ENCODE measurements at regions of chr1 and their contacts with region 1.

Region 1: DNA sequence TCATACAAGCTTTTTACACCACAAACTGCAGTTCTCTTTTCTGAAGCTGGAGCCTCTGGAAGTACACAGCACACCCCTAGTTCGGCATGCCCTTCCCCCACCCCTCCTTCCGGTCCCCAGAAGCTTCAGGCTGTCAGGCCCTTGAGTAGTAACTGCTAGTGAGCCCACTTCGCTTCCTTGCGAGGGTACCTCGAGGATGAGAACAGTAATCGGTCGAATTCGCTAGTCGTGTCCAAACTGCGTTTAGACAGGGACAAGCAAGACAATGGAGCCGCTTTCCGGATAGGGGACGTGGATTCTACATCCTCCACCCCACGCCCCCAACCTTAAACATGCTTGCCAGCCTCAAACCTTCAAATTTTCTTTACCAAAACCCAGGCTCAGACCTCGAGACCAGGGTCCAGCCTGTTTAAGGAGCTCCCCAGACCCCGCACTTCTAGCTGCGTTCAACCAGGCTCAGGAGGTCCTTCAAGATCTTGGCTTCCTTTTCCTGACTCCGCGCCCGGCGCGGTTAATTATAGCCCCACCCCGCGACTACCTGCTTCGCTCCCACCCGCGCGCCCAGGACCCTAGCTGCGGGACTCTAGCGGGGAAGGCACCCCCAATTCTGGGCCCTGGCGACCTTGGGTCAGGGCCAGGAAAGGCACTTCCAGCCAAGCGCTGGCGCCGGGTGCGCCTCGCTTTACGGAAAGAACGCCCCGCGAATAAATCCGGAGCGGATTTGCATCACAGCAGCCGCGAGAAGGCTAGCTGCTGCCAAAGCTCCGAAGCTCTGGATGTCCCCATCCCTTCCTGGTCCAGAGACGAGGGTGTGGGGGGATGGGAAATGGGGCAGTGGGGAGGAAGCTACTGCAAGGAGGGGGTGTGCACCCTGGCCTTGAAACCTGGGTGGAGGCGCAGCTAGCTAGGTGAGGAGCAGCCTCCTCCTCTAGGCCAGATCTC is 8.1 kb upstream of the TSPAN1 start:
- DNase-seq: peak; percentile 63
- H3K4me3 Mint-ChIP-seq: peak overlapping the region; percentile 76
- H3K27ac Mint-ChIP-seq: peak overlapping the region; percentile 72
- H3K4me1 Mint-ChIP-seq: peaks cover 16% of the 10 kb centered on the region
- H3K27me3 Mint-ChIP-seq: peaks cover 2% of the 10 kb centered on the region

Region 2: GRCh38 chr1:45930258-45931150 is 236.3 kb before region 1 on chr1:
- CTCF ChIA-PET with region 1: no interaction called
- POLR2A ChIA-PET with region 1: no interaction called
- intact Hi-C with region 1: no loop called
- DNase-seq: no peak
- H3K4me3 Mint-ChIP-seq: no peak overlapping the region
- H3K27ac Mint-ChIP-seq: no peak overlapping the region
- H3K4me1 Mint-ChIP-seq: peaks cover 9% of the 10 kb centered on the region
- H3K27me3 Mint-ChIP-seq: no peaks in the 10 kb centered on the region

Region 3: DNA sequence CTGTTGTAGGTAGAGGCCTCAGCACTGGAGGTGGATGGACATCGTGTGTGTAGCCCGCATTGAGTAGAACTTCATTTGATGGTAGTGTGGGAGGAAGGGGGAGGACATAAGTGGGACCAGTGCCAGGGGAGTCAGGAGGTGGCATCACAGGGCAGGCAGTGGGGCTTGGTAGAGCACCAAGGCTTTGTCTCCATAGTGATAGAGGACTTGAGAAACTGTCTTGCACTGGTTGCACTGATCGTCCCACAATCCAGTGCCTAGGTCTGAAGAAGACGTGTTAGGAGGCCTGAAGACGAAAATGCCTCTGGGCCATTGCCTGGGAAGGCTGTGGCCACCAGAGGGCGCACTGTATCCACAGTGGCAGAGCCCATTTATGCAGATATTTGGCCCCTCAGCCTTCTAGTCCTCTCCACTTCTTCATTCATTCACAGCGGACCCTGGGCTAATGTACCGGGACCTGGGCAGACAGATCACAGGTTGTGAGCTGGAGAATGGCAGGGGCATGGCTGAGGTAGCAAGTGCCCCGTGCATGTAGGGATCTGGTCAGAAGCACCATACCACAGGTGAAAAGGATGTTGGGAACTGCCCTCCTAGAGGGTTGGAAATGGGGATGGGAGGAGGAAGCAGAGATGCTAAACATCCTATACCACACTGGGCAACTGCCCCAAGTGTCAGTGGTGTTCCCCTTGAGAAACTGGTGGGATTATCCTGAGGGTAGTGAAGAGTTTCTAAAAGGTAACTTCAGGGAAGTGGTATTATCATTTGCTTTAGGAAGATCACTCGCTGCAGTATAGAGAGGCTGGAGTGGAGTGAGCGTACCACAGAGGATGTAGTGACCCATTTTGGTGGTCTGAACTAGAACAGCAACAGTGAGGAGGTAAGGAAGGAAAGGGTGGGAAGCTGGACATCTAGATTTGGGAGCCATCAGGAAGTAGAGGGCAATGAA is 129.6 kb before region 1 on chr1:
- CTCF ChIA-PET with region 1: interaction called, 15 read pairs
- POLR2A ChIA-PET with region 1: no interaction called
- intact Hi-C with region 1: no loop called
- DNase-seq: peak; percentile 88
- H3K4me3 Mint-ChIP-seq: no peak overlapping the region
- H3K27ac Mint-ChIP-seq: no peak overlapping the region
- H3K4me1 Mint-ChIP-seq: no peaks in the 10 kb centered on the region
- H3K27me3 Mint-ChIP-seq: no peaks in the 10 kb centered on the region

Region 4: GRCh38 chr1:46132529-46133180 is 34.1 kb before region 1 on chr1 and contains the start of gene PIK3R3:
- CTCF ChIA-PET with region 1: interaction called, 4 read pairs
- POLR2A ChIA-PET with region 1: no interaction called
- intact Hi-C with region 1: loop called (anchors 5 kb)
- DNase-seq: peak; percentile 94
- H3K4me3 Mint-ChIP-seq: peak within 1 kb of the TSS; percentile 92
- H3K27ac Mint-ChIP-seq: peak within 1 kb of the TSS; percentile 84
- H3K4me1 Mint-ChIP-seq: peaks cover 20% of the 10 kb centered on the region
- H3K27me3 Mint-ChIP-seq: peaks cover 31% of the 10 kb centered on the region
- total RNA-seq, gene PIK3R3: 0.65 to 0.83 TPM

Region 5: DNA sequence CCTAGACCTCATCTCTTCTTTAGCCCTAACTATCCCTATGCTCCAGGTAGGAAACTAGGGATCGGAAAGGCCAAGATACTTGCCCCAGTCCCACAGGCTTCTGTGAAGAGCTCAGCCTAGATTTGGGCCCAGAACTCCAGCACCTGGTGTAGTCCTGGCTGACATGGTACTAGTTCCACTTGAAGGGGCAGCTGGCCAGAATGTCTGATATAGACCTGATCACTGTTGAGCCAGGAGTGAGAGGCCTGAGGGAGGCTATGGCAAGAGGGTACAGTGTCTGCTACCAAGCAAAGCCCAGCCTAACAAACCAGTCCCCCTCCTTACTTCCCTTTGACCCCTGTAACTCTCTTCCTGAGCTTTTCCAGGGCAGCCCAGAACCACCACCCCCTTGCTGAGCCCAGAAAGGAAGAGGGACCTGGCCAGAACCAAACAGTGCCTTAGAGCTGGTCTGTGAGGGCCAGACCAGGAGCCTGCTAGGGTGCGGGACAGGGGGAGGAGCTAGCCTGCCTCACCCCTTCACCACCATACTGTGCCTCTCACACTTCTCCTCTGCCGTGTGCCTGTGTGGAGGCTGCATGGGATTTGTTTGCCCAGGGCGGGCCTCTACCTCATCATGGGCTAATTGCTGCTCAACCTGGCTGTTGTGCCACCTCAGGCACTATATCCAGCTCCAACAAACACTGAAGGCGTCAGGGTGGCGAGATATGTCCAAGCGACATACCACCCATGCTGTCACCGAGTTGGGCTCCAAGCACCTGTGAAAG is 20.5 kb after region 1 on chr1:
- CTCF ChIA-PET with region 1: no interaction called
- POLR2A ChIA-PET with region 1: no interaction called
- intact Hi-C with region 1: no loop called
- DNase-seq: no peak
- H3K4me3 Mint-ChIP-seq: no peak overlapping the region
- H3K27ac Mint-ChIP-seq: no peak overlapping the region
- H3K4me1 Mint-ChIP-seq: peaks cover 22% of the 10 kb centered on the region
- H3K27me3 Mint-ChIP-seq: no peaks in the 10 kb centered on the region

Region 6: GRCh38 chr1:46197964-46198811 is 31.4 kb after region 1 on chr1 and contains the start of gene POMGNT1:
- CTCF ChIA-PET with region 1: no interaction called
- POLR2A ChIA-PET with region 1: no interaction called
- intact Hi-C with region 1: loop called (anchors 1 kb)
- DNase-seq: peak; percentile 85
- H3K4me3 Mint-ChIP-seq: peak within 1 kb of the TSS; percentile 82
- H3K27ac Mint-ChIP-seq: peak within 1 kb of the TSS; percentile 58
- H3K4me1 Mint-ChIP-seq: peaks cover 26% of the 10 kb centered on the region
- H3K27me3 Mint-ChIP-seq: peaks cover 2% of the 10 kb centered on the region
- total RNA-seq, gene POMGNT1: 43.6 to 44.1 TPM

Measured in activated CD4-positive, alpha-beta memory T cell treated with anti-CD3 and anti-CD28 coated beads for 36 hours (primary cell).